CD4-positive, alpha-beta T cell (primary cell): ENCODE measurements at regions of chr1 and their contacts with region 1.

Region 1: GRCh38 chr1:201329286-201329685 is 46.0 kb downstream of the PKP1 start:
- DNase-seq: no peak
- ATAC-seq: no peak
- H3K4me3 ChIP-seq: no peak overlapping the region
- H3K4me3 Mint-ChIP-seq: no peak overlapping the region
- H3K27ac ChIP-seq: no peak overlapping the region
- H3K27ac Mint-ChIP-seq: no peak overlapping the region
- H3K4me1 ChIP-seq: no peaks in the 10 kb centered on the region
- H3K4me1 Mint-ChIP-seq: no peaks in the 10 kb centered on the region
- H3K27me3 ChIP-seq: no peaks in the 10 kb centered on the region
- H3K27me3 Mint-ChIP-seq: no peaks in the 10 kb centered on the region
- CTCF ChIP-seq: no peak

Region 2: DNA sequence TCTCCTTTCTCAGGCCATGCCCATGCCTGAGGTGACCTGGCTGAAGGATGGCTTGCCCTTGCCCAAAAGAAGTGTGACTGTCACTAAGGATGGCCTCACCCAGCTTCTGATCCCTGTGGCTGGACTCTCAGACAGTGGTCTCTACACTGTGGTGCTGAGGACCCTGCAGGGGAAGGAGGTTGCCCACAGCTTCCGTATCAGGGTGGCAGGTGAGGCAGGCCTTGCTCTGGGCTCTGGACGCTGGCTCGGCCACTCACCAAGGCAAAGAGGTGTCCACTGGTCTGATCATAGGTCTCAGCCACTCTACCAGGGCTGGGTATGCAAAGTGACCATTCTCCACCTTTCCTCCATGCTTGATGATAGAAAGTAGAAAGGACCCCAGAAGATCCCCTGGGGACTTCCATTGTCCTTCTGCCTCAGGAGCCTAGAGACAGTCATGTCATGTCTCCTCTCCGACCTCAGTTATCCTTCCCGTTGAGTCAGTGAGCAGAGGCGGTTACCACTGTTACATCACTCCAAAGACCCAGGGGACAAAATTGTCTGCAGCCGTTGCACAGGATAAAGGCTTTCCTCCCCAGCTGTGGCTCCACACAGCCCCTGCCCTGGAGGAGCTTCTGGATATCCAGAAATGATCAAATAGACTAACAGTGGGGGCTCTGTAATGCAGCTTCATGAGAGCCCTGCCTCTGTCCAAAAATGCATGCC is 104.5 kb before region 1 on chr1:
- CTCF ChIA-PET with region 1: no interaction called
- POLR2A ChIA-PET with region 1: no interaction called
- intact Hi-C with region 1: no loop called
- DNase-seq: peak in 1 of 14 experiments; percentile 27
- ATAC-seq: no peak
- H3K4me3 ChIP-seq: no peak overlapping the region
- H3K4me3 Mint-ChIP-seq: no peak overlapping the region
- H3K27ac ChIP-seq: no peak overlapping the region
- H3K27ac Mint-ChIP-seq: no peak overlapping the region
- H3K4me1 ChIP-seq: no peaks in the 10 kb centered on the region
- H3K4me1 Mint-ChIP-seq: no peaks in the 10 kb centered on the region
- H3K27me3 ChIP-seq: peaks cover 2 to 11% of the 10 kb centered on the region in 2 experiments
- H3K27me3 Mint-ChIP-seq: peaks cover 13% of the 10 kb centered on the region
- CTCF ChIP-seq: no peak

Region 3: DNA sequence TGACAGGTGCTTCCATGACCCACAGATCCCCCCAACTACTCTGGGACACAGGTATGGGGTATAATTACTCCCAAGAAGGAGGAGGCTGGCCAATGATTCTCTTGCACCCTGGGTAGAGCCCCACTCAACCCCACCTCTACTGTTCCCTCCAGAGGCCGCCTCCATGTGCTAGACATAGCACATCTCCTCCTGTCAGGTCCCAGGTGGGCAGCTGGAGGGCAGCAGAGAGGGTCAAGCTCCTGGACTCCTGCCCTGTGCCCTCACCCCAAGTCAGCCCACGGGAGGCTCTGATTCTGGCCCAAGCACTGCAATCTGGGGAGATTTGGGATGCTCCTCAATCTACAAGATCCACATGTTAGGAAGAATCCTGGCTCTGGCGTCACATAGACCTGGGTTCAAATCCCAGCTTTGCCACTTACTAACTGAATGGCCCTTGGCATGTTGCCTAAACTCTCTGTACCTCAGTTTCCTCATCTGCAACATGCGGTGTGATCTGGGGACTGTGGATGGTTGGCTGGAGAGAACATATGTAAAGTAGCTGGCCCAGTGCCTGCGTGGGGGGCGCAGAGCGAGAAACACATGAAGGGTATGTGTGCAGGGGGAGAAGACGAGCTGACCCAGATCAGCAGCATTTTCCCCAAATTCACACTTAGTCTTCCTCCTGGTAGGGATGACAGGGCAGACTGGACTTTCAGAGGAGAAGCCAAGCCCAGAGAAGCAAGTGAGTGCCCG is 25.0 kb after region 1 on chr1:
- CTCF ChIA-PET with region 1: no interaction called
- POLR2A ChIA-PET with region 1: no interaction called
- intact Hi-C with region 1: loop called in 1 of 2 experiments (anchors 2 kb)
- DNase-seq: no peak
- ATAC-seq: no peak
- H3K4me3 ChIP-seq: no peak overlapping the region
- H3K4me3 Mint-ChIP-seq: no peak overlapping the region
- H3K27ac ChIP-seq: no peak overlapping the region
- H3K27ac Mint-ChIP-seq: no peak overlapping the region
- H3K4me1 ChIP-seq: no peaks in the 10 kb centered on the region
- H3K4me1 Mint-ChIP-seq: no peaks in the 10 kb centered on the region
- H3K27me3 ChIP-seq: peaks cover 2 to 6% of the 10 kb centered on the region in 2 experiments
- H3K27me3 Mint-ChIP-seq: peaks cover 30% of the 10 kb centered on the region
- CTCF ChIP-seq: no peak